ENCODE measurements at regions of chr16 and their contacts with region 1.

Region 1: GRCh38 chr16:740764-741505 is at the start of gene CIAO3:
- DNase-seq: peak; percentile 91
- H3K4me3 Mint-ChIP-seq: peak within 1 kb of the TSS; percentile 79
- H3K27ac Mint-ChIP-seq: peak within 1 kb of the TSS; percentile 62
- H3K4me1 Mint-ChIP-seq: peaks cover 11% of the 10 kb centered on the region
- H3K27me3 Mint-ChIP-seq: no peaks in the 10 kb centered on the region
- total RNA-seq, gene CIAO3: 42.8 and 43.4 TPM in 2 replicates

Region 2: DNA sequence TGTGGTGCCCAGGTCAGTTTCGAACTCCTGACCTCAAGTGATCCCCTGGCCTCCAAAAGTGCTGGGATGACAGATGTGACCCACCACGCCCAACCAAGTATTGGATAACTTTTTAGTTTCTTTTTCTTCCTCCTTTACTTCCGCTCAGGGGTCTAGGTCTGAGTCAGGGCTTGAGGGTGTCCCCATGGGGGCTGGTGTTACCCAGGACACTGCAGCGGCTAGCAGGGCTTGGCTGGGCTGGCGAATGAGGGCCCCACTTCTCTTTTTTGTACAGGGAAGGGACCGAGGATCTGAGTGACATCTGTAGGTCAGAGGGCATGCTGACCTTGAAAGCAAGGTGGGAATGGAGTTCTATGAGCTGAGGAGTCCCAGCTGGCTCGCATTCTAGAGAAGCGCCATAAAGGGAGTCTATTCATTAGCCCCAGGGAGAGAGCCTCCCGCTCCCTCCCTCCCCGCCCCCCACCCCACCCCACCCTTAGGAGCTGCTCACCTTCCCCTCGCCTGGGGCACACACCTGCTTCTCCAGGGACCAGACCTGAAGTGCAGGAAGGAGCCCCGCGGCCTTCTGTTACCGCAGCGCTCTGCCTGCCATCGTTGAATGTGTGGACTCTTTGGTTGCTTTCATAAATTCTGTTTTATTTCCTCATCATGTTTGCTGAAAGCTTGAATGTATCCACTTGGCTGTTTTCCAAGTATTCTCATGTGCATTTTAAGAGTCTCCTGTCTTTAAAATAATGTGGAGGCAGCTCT is 290.4 kb before region 1 on chr16:
- intact Hi-C with region 1: no loop called
- DNase-seq: no peak
- H3K4me3 Mint-ChIP-seq: no peak overlapping the region
- H3K27ac Mint-ChIP-seq: no peak overlapping the region
- H3K4me1 Mint-ChIP-seq: peaks cover 4% of the 10 kb centered on the region
- H3K27me3 Mint-ChIP-seq: no peaks in the 10 kb centered on the region

Region 3: DNA sequence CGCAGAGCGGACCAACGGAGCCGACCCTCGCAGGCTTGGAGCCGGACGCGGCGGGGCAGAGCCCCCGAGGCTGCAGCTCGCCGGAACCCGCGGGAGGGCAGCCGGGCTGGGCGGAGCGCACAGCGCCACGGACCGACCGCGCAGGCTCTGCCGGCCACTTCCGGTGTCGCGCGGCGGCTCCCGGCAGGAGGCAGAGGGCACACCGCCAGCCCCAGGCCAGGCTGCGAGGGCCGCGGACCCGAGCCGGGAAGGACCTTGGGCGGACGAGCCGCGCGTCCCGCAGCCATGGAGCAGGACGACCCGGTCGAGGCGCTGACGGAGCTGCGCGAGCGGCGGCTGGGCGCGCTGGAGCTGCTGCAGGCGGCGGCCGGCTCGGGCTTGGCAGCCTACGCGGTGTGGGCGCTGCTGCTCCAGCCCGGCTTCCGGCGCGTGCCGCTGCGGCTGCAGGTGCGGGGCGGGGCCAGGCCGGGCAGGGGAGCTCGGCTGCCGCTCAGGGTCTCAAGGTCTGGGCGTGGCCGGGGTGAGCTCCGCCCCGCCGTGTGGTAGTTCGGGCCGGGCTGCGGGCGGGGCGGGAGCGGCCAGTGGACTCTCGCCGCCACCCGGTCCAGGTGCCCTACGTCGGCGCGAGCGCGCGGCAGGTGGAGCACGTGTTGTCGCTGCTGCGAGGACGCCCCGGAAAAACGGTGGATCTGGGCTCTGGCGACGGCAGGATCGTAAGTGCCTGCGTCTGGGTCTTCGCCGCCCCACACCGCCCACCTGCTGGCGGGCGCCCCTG is 19.8 kb before region 1 on chr16 and contains the start of gene ANTKMT:
- intact Hi-C with region 1: loop called (anchors 1 kb)
- DNase-seq: peak; percentile 72
- H3K4me3 Mint-ChIP-seq: peak within 1 kb of the TSS; percentile 71
- H3K27ac Mint-ChIP-seq: peak within 1 kb of the TSS; percentile 19
- H3K4me1 Mint-ChIP-seq: peaks cover 10% of the 10 kb centered on the region
- H3K27me3 Mint-ChIP-seq: peaks cover 3% of the 10 kb centered on the region
- total RNA-seq, gene ANTKMT: 52.8 and 54.4 TPM in 2 replicates

Region 4: GRCh38 chr16:760545-761343 is 19.8 kb after region 1 on chr16 and contains the start of gene MSLN:
- intact Hi-C with region 1: no loop called
- DNase-seq: no peak
- H3K4me3 Mint-ChIP-seq: no peak within 1 kb of the TSS
- H3K27ac Mint-ChIP-seq: no peak within 1 kb of the TSS
- H3K4me1 Mint-ChIP-seq: no peaks in the 10 kb centered on the region
- H3K27me3 Mint-ChIP-seq: no peaks in the 10 kb centered on the region
- total RNA-seq, gene MSLN: not detected in 2 replicates

Region 5: GRCh38 chr16:788394-789126 is 47.6 kb after region 1 on chr16 and contains the start of gene CHTF18:
- intact Hi-C with region 1: loop called (anchors 5 kb)
- DNase-seq: peak; percentile 92
- H3K4me3 Mint-ChIP-seq: peak within 1 kb of the TSS; percentile 86
- H3K27ac Mint-ChIP-seq: peak within 1 kb of the TSS; percentile 68
- H3K4me1 Mint-ChIP-seq: peaks cover 5% of the 10 kb centered on the region
- H3K27me3 Mint-ChIP-seq: no peaks in the 10 kb centered on the region
- total RNA-seq, gene CHTF18: 108 and 119 TPM in 2 replicates